ENCODE measurements at regions of chr20 and their contacts with region 1.

Region 1: GRCh38 chr20:14337400-14338171 is at the start of gene FLRT3:
- DNase-seq: peak; percentile 93
- ATAC-seq: peak; percentile 99
- H3K4me3 ChIP-seq: peak within 1 kb of the TSS; percentile 33 to 65 (median 54)
- H3K27ac ChIP-seq: no peak within 1 kb of the TSS
- H3K4me1 ChIP-seq: peaks cover 17% of the 10 kb centered on the region; the same call in 1 of the 2 replicates
- H3K27me3 ChIP-seq: no peaks in the 10 kb centered on the region; a peak in 1 of 5 replicates
- CTCF ChIP-seq: peak; percentile 97
- EP300 ChIP-seq: peak; percentile 22 to 48; a peak in 2 of 4 replicates
- POLR2A ChIP-seq: peak in 1 of 2 experiments; percentile 83; a peak in 3 of 4 replicates
- RAD21 ChIP-seq: peak; percentile 86
- total RNA-seq, gene FLRT3: 0.28 and 0.44 TPM in 2 replicates

Region 2: DNA sequence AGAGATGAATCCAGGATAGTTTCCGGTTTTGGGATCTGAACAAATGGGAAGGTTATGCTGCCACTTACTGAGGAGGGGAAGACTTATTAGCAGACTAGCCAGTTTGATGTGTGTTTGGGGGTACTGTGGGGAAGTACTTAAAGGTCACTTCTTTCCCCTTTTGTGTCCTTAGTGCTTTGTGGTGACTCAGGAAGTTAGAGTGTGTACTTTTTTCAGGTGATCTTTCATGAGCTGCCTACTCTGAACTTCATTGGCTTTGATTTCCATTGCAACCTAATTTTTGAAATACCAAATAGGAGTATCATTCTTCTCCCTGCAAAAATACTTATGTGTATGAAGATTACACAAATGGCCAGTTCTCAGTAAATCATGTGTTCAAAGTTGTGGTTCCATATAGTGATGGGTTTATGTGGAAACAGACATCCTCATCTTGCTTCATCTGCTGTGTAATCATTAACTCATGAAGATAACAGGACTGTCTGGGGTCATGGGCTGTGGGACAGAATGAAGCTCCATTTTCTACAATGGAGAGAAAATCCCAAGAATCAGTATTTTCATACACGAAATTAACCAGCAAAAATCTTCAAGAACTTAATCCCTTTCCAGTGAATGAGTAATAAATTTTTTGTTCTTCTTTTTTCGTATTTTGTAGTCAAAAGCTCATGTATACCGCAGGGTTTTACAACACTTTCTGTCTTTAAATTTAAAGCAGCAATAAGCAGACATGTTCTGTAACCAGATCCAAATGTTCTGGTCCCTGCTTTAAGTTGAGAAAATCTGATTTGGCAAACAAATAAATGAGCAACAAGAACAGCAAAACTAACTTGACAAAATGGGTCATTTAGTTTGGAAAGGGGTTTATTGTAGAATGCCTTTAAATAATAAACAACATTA is 272.0 kb after region 1 on chr20:
- CTCF ChIA-PET with region 1: no interaction called
- POLR2A ChIA-PET with region 1: no interaction called
- in situ Hi-C with region 1: no loop called
- intact Hi-C with region 1: loop called (anchors 2 kb)
- DNase-seq: peak; percentile 73
- ATAC-seq: peak; percentile 100
- H3K4me3 ChIP-seq: no peak overlapping the region
- H3K27ac ChIP-seq: no peak overlapping the region
- H3K4me1 ChIP-seq: peaks cover 14% of the 10 kb centered on the region
- H3K27me3 ChIP-seq: no peaks in the 10 kb centered on the region
- CTCF ChIP-seq: no peak
- EP300 ChIP-seq: peak in 1 of 2 experiments; percentile 27; a peak in 1 of 4 replicates
- POLR2A ChIP-seq: no peak
- RAD21 ChIP-seq: no peak

Region 3: DNA sequence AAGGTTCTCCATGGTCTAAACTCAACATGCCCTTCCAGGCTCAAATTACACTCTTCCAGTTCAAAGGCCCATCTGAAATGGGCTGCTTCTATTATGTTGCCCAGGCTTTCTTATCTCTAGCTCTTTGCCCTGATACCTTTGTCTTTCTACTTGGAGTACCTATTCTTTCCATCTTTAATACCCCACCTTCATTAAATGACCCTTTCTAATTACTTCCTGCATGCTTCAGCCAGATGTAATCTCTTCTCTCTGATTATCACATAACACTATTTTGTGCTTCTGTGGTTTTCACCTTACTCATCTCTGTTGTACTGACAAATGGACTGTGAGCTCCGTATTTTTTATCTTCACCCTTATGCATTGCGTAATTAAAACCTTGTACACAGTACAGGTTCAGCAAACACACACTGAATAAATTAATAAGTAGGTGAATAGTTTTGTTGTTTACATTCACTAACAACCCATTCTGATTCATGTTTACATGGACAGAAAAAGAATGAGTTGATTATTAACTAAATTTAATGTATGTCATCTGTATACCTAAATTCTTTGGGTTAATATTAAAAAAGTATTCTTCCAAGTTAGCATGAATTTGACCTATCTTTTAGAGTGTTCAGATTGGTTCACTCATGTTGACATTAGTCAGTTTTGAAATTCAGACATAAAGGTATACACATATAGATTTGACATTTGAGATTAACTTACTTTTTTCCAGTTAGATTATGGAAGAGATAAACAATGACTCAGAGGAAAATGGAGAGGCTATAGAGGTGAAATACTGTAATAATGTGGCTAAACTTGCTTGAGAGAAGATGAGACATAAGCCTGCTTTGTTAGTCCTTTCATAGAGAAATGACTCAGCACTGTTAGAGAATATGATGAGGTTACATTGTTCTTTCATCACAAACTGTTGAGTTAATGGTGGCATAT is 541.4 kb after region 1 on chr20:
- CTCF ChIA-PET with region 1: no interaction called
- POLR2A ChIA-PET with region 1: no interaction called
- in situ Hi-C with region 1: no loop called
- intact Hi-C with region 1: loop called (anchors 5 kb)
- DNase-seq: peak; percentile 83
- ATAC-seq: peak; percentile 85
- H3K4me3 ChIP-seq: no peak overlapping the region; a peak in 1 of 6 replicates
- H3K27ac ChIP-seq: peak overlapping the region; percentile 1
- H3K4me1 ChIP-seq: peaks cover 18% of the 10 kb centered on the region
- H3K27me3 ChIP-seq: no peaks in the 10 kb centered on the region
- CTCF ChIP-seq: no peak
- EP300 ChIP-seq: peak in 1 of 2 experiments; percentile 71; a peak in 2 of 4 replicates
- POLR2A ChIP-seq: no peak
- RAD21 ChIP-seq: no peak

Region 4: DNA sequence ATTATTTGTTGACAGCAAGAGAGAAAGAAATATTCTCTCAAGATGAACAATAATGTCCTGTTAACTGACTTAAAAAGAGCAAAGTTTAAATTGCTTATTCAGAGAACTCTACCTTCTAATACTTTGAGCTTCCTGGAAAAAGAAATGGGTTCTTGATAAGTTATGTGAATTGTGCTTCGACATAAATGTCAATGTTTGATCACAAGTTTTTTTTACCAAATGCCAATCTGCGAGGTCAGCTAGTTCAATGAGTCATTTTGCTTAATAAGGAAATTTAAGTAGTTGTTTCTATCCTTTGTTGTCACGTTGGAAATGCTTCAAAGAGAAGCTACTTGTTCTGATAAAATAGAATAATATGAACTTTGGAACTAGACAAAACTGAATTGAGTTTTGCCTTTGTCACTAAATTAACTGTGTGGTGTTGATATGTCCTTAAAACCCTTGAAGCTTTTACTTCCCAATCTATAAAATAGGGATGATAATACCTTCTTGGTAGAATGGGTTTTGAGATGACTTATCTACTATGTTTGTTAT is 641.9 kb after region 1 on chr20:
- CTCF ChIA-PET with region 1: no interaction called
- POLR2A ChIA-PET with region 1: interaction called, 13 read pairs
- in situ Hi-C with region 1: no loop called
- intact Hi-C with region 1: loop called (anchors 1 kb)
- DNase-seq: peak; percentile 99
- ATAC-seq: peak; percentile 74
- H3K4me3 ChIP-seq: no peak overlapping the region; a peak in 1 of 6 replicates
- H3K27ac ChIP-seq: peak overlapping the region; percentile 73
- H3K4me1 ChIP-seq: peaks cover 76% of the 10 kb centered on the region
- H3K27me3 ChIP-seq: no peaks in the 10 kb centered on the region
- CTCF ChIP-seq: no peak
- EP300 ChIP-seq: peak in 1 of 2 experiments; percentile 98; a peak in 2 of 4 replicates
- POLR2A ChIP-seq: no peak
- RAD21 ChIP-seq: no peak

Region 5: DNA sequence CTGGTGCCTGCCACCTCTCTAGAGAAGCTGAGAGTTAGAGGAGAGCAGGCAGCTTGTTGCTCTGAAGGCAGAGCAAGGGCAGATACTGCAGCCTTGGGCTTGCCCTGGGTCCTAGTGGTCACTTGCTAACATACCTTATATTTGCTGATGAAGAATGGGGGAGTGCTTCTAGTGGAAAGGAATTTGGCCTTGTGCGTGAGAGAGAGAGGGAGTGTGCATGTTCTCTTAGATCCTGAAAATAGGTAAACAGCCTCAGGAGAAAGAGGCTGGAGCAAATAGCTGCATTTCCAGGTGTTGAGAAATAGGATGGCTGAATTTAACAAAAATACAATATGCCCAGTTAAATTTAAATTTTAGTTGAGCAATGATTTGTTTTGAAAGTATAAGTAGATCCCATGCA is 724.4 kb after region 1 on chr20:
- CTCF ChIA-PET with region 1: no interaction called
- POLR2A ChIA-PET with region 1: interaction called, 5 read pairs
- in situ Hi-C with region 1: no loop called
- intact Hi-C with region 1: loop called (anchors 10 kb)
- DNase-seq: peak; percentile 97
- ATAC-seq: peak; percentile 95
- H3K4me3 ChIP-seq: peak overlapping the region in 2 of 3 experiments; percentile 7 to 20; a peak in 2 of 6 replicates
- H3K27ac ChIP-seq: peak overlapping the region; percentile 64
- H3K4me1 ChIP-seq: peaks cover 44% of the 10 kb centered on the region
- H3K27me3 ChIP-seq: no peaks in the 10 kb centered on the region
- CTCF ChIP-seq: peak; percentile 42; the same call in 1 of the 2 replicates
- EP300 ChIP-seq: peak; percentile 90 to 91
- POLR2A ChIP-seq: peak; percentile 22 to 26; a peak in 1 of 4 replicates
- RAD21 ChIP-seq: 0 out of 2 replicates have a peak, but pooled peaks have one; percentile 26

Region 6: DNA sequence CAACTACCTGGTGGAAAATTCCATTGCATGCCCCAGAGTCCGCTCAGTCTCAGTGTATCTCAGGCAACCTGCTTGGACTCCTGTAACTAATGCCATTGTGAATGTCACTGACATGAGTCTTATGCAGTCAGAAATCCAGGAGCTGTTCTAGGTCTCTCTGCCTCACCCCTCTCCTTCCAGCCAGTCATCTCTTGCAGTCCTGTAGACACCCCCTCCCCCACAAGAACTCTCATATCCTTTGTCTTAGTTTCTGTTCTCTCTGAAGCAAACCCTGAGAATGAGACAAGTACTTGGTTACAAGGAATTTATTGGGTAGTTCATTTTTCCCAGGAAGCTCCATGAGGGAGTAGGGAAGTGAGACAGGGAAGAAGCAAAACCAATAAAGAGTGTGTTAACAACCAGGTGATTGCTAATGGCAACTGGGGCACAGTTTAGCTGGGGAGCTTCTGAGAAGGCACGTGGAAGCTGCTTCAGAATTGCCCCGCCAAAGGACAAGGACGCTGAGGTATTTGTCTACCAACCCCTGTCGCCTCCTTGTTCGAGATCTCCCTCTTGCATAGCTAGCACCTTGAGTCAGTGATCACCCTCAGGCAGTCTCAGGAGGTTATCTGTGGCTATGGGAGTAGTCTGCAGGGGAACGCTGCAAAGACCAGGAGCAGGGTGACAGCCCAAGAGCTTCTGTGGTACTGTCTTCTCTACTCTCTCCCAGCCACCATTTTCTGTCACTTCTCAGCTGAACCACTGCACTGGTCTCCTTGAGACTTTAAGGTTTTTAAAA is 911.2 kb after region 1 on chr20:
- CTCF ChIA-PET with region 1: no interaction called
- POLR2A ChIA-PET with region 1: no interaction called
- in situ Hi-C with region 1: loop called (anchors 10 kb)
- intact Hi-C with region 1: no loop called
- DNase-seq: no peak
- ATAC-seq: peak; percentile 22; the same call in 2 of the 3 replicates
- H3K4me3 ChIP-seq: no peak overlapping the region
- H3K27ac ChIP-seq: no peak overlapping the region
- H3K4me1 ChIP-seq: no peaks in the 10 kb centered on the region
- H3K27me3 ChIP-seq: no peaks in the 10 kb centered on the region
- CTCF ChIP-seq: no peak
- EP300 ChIP-seq: no peak
- POLR2A ChIP-seq: no peak
- RAD21 ChIP-seq: no peak

Region 7: GRCh38 chr20:15930311-15931305 is 1593.0 kb after region 1 on chr20:
- CTCF ChIA-PET with region 1: no interaction called
- POLR2A ChIA-PET with region 1: no interaction called
- in situ Hi-C with region 1: no loop called
- intact Hi-C with region 1: loop called (anchors 5 kb)
- DNase-seq: peak; percentile 28
- ATAC-seq: peak; percentile 80
- H3K4me3 ChIP-seq: no peak overlapping the region
- H3K27ac ChIP-seq: no peak overlapping the region
- H3K4me1 ChIP-seq: no peaks in the 10 kb centered on the region
- H3K27me3 ChIP-seq: no peaks in the 10 kb centered on the region
- CTCF ChIP-seq: peak; percentile 42
- EP300 ChIP-seq: no peak
- POLR2A ChIP-seq: no peak
- RAD21 ChIP-seq: no peak